GM13976 (cell line): ENCODE measurements at regions of chr7 and their contacts with region 1.

Region 1: DNA sequence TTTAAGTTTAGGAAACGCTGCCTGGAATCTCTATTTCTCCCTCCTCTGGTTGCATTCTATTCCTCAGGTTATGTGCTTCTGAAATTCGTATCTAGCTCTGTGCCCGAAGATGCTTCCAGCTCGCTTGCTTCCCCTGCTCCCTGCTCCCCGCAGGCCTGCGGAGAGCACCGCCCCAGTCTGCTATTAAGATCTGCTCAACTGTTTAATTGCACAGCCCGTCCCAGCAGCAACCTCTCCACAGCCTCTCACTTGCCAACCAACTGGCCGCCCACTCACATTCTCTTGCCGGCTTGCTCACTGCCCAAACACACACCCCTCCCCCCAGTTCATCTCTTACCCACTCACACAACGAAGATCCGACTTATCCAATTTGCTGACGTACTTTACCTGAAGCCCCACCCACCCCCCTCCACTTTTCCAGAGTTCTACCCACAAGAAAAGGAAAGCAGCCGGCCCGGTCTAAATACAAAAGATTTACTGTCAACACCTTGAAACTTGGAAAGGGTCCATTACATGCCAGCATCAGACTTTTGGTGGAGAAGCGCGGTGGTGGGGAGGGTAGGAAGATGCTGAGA is 167.3 kb upstream of the KLF14 start:
- DNase-seq: no peak
- CTCF ChIP-seq: no peak

Region 2: DNA sequence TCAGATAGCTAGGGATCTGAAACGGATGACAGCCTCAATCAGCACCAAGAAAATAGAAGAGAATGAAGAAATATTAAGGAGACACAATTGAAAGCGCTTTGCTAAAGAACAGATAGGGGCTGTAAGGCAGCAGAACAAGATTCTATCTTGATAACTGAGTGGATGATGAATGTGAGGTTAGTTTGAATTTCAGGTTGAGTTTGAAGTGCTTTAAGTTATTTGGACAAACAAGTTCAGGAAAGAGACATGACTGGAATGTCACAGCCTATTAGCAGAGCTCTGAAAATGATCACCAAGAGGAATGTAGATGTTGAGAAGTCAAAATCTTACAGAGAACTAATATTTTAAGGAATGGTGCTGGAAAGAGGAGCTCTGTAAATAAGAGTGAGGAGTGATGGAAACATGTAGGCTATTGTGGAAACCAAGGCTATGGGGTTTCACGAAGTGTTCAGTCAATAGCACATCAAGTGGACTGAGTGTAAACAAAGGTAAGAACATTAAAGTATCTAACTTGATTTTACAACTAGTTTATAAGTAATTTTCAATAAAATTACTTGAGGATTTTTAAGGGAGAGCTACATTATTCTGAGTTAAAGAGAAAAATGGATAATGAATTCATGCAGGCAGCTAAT is 347.8 kb before region 1 on chr7:
- in situ Hi-C with region 1: no loop called
- DNase-seq: no peak
- CTCF ChIP-seq: no peak

Region 3: DNA sequence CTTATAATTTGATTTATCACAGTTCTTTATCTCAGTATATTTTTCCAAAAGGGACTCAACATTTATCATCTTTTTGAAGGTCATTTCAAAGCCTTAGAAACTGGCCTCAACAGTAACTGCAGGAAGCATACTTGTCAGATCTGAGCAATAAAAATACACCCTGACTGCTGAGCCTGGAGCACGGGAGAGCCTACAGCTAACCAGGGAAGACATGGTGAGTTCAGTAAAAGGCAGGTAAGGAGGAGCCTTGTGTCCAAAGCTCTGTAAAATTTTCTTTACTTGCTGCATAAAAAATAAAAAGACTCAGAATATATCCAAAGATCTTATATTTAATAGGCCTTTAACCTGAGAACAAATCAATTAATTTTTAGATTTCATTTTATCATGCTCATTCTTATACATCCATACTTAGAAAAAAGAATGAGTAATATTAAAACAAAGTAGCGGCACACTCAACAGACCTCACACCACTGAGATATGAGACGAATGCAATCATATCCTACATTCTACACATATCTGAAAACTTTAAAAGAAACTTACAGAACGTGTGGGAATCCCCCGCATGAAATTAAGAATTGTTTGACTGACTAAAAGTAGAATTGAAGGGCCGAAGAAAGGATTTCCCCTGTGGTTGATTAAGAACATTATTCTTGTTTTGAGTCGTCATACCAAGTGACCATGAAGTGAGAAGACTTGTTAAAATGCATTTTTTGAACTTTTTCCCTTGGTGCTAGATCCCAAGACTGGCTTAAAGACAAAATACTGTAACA is 130.0 kb after region 1 on chr7:
- in situ Hi-C with region 1: loop called (anchors 5 kb)
- DNase-seq: peak; percentile 62
- CTCF ChIP-seq: no peak

Region 4: GRCh38 chr7:131212114-131212513 is 310.8 kb after region 1 on chr7:
- in situ Hi-C with region 1: no loop called
- DNase-seq: no peak
- CTCF ChIP-seq: no peak

Region 5: DNA sequence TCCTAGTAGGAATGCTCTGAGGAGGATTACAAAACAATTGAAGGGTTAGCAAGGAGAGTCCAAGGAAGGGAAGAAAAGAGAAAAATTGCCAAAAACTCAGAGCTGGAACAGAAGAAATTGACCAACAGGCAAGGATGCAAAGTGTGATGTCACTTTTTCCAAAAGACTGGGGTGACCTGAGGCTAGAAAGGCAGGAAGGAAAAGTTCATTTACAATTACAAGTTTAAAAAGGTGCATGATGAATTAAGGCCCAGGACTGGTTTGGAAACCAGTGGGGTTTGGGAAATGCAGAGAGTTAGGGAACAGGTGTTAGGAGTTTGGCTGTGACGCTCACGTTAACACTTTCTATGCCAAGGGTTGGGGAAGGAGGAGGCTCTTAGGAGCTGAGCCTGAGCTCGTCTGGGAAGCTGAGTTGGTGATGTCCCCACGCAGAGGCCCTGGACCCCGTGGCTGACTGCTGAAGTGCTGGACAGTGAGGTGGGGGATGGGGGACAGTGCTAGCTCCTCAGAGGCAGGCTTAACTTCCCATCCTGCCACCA is 747.8 kb after region 1 on chr7:
- in situ Hi-C with region 1: no loop called
- DNase-seq: no peak
- CTCF ChIP-seq: no peak